ENCODE measurements at regions of chr3 and their contacts with region 1.

Region 1: GRCh38 chr3:192816351-192816750 is 89.0 kb upstream of the FGF12 start:
- DNase-seq: peak; percentile 13 to 48
- ATAC-seq: no peak
- H3K4me3 ChIP-seq: no peak overlapping the region
- H3K27ac ChIP-seq: peak overlapping the region; percentile 48 to 61; a peak in 4 of 6 replicates
- H3K4me1 ChIP-seq: peaks cover 52% of the 10 kb centered on the region
- CTCF ChIP-seq: peak; percentile 79
- EP300 ChIP-seq: no peak
- POLR2A ChIP-seq: no peak
- RAD21 ChIP-seq: peak; percentile 88 to 89

Region 2: DNA sequence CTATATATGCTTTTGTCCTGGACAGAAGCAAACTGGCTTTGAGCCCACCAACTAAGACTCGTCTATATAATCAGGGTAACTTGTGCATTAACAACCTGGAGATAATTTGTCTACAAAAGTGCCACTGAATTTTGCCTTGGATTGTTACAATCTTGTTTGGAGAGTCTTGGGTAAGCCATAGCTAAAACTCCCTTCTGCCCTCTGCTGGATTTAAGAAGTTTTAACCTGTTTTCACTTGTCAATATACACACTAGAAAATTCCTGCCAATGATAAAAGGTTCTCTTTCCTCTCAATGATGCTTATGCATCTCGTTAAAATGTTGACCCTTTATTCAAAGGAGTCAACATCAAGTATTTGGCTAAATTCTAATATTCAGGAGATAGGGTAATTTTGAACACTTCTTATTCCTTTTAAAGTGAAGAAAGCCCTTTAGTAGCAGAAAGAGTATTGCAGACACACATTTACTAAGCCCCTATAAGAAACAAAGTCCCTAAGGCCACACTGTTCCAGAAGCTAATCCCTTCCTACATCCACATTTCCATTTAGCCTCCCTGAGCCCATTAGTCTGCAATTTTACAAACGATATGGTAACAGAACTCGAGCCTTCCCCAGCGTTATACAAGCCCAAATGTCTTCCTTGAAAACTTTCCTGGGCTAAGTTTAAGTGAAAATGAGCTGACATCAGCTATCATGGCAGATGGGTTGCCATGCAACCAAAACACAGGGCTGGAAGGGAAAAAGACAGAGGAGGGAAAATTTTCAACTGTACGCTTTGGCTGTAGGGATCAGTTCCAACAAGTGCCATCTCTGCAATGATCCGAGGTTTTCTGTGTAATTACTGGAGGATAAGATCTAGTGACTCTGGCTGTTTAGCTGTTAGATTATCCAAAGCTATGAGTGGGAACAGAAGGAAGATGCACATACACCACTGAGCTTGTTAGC is 13.1 kb before region 1 on chr3:
- CTCF ChIA-PET with region 1: interaction called, 15 read pairs
- POLR2A ChIA-PET with region 1: no interaction called
- DNase-seq: peak; percentile 46 to 50
- ATAC-seq: peak; percentile 62 to 79; a peak in 4 of 6 replicates
- H3K4me3 ChIP-seq: no peak overlapping the region
- H3K27ac ChIP-seq: no peak overlapping the region
- H3K4me1 ChIP-seq: no peaks in the 10 kb centered on the region
- CTCF ChIP-seq: peak; percentile 52
- EP300 ChIP-seq: no peak
- POLR2A ChIP-seq: no peak
- RAD21 ChIP-seq: peak; percentile 33 to 43; a peak in 2 of 5 replicates

Region 3: GRCh38 chr3:192899540-192899982 is 83.2 kb after region 1 on chr3:
- CTCF ChIA-PET with region 1: interaction called, 12 read pairs
- POLR2A ChIA-PET with region 1: no interaction called
- DNase-seq: peak in 1 of 2 experiments; percentile 64
- ATAC-seq: peak; percentile 74 to 75
- H3K4me3 ChIP-seq: no peak overlapping the region
- H3K27ac ChIP-seq: peak overlapping the region; percentile 61 to 76
- H3K4me1 ChIP-seq: peaks cover 63% of the 10 kb centered on the region
- CTCF ChIP-seq: no peak
- EP300 ChIP-seq: no peak
- POLR2A ChIP-seq: no peak
- RAD21 ChIP-seq: no peak

Region 4: GRCh38 chr3:192917404-192918274 is 101.3 kb after region 1 on chr3 and contains the start of gene MB21D2:
- CTCF ChIA-PET with region 1: interaction called, 22 read pairs
- POLR2A ChIA-PET with region 1: interaction called, 3 read pairs
- DNase-seq: peak; percentile 66 to 81
- ATAC-seq: peak; percentile 92 to 94
- H3K4me3 ChIP-seq: peak within 1 kb of the TSS; percentile 85
- H3K27ac ChIP-seq: peak within 1 kb of the TSS; percentile 89 to 96
- H3K4me1 ChIP-seq: peaks cover 44% of the 10 kb centered on the region
- CTCF ChIP-seq: no peak
- EP300 ChIP-seq: no peak
- POLR2A ChIP-seq: peak; percentile 48
- RAD21 ChIP-seq: peak in 1 of 2 experiments; percentile 7; a peak in 2 of 5 replicates
- polyA plus RNA-seq, gene MB21D2: 6.6 and 7.5 TPM in 2 replicates

Region 5: GRCh38 chr3:193040836-193041672 is 224.7 kb after region 1 on chr3:
- CTCF ChIA-PET with region 1: interaction called, 237 read pairs
- POLR2A ChIA-PET with region 1: no interaction called
- DNase-seq: peak; percentile 15 to 55
- ATAC-seq: peak; percentile 34 to 81; a peak in 4 of 6 replicates
- H3K4me3 ChIP-seq: no peak overlapping the region
- H3K27ac ChIP-seq: no peak overlapping the region; a peak in 1 of 6 replicates
- H3K4me1 ChIP-seq: 0 out of 3 replicates have a peak, but pooled peaks cover 3% of the 10 kb centered on the region
- CTCF ChIP-seq: peak; percentile 71
- EP300 ChIP-seq: no peak
- POLR2A ChIP-seq: no peak
- RAD21 ChIP-seq: peak; percentile 85

Region 6: DNA sequence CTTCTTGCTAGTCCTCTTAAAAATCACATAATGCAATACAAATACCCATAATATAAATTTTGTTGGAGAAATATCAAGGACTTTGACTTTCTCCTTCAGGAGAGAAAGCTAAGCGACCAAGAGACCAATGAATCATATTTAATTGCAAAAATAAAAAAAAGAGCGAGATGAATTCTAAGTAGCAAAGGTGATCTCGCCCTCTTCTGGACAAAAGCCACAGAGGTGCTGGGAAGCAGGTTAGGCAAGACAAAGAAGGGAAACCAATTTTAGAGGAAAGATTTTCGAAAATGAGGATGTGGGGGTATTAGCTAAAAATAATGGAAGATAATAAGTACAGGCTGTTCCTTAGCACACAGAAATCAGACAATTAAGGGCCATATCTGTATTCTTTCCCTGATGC is 313.2 kb after region 1 on chr3:
- CTCF ChIA-PET with region 1: interaction called, 13 read pairs
- POLR2A ChIA-PET with region 1: no interaction called
- DNase-seq: peak in 1 of 2 experiments; percentile 7
- ATAC-seq: no peak
- H3K4me3 ChIP-seq: no peak overlapping the region
- H3K27ac ChIP-seq: no peak overlapping the region
- H3K4me1 ChIP-seq: no peaks in the 10 kb centered on the region
- CTCF ChIP-seq: peak; percentile 23; the same call in 1 of the 3 replicates
- EP300 ChIP-seq: no peak
- POLR2A ChIP-seq: no peak
- RAD21 ChIP-seq: peak; percentile 19 to 20; a peak in 1 of 5 replicates

Region 7: DNA sequence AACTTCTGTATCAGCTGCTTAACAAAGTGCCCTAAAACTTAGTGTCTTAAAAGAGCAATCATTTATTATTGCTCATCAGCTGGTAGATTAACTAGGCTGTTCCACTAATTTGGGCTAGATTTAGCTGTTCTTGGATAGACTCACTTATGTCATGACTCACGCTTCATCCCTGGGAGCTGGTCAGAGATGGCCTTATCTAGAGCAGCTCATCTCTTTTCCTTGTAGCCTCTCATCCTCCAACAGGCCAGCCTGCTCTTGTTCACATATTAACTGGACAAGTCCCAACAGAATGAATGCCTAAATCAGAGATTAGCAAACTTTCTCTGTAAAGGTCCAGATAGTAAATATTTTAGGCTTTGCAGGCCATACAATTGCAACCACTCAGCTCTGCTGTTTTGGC is 357.8 kb after region 1 on chr3:
- CTCF ChIA-PET with region 1: no interaction called
- POLR2A ChIA-PET with region 1: no interaction called
- DNase-seq: no peak
- ATAC-seq: no peak
- H3K4me3 ChIP-seq: no peak overlapping the region
- H3K27ac ChIP-seq: no peak overlapping the region
- H3K4me1 ChIP-seq: no peaks in the 10 kb centered on the region
- CTCF ChIP-seq: no peak
- EP300 ChIP-seq: no peak
- POLR2A ChIP-seq: no peak
- RAD21 ChIP-seq: no peak

Region 8: DNA sequence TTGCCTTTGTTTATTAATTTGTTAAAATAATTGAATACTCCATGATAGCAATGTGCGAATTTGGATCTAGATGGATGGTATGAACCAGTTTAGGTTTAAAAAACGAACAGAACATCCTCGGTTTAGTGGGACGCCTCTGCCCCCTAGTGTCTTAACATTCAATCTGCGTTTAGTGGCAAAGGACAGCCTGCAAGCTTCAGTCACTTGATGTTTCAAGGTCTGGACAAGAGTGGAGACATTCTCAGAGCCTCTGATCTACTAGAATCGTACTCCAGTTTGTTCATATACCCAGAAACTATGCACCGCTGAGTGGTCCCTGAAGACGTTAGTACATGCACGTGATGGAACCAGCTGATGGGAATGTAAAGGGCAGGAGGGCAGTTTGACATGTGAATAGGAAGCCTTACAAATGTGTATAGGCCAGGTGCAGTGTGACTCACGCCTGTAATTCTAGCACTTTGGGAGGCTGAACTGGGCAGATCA is 756.1 kb after region 1 on chr3:
- CTCF ChIA-PET with region 1: interaction called, 17 read pairs
- POLR2A ChIA-PET with region 1: no interaction called
- DNase-seq: peak; percentile 25 to 73
- ATAC-seq: peak; percentile 90 to 93
- H3K4me3 ChIP-seq: no peak overlapping the region
- H3K27ac ChIP-seq: no peak overlapping the region
- H3K4me1 ChIP-seq: no peaks in the 10 kb centered on the region
- CTCF ChIP-seq: peak; percentile 78
- EP300 ChIP-seq: no peak
- POLR2A ChIP-seq: no peak
- RAD21 ChIP-seq: peak; percentile 81 to 84